AG04449 (cell line): ENCODE measurements at regions of chr9 and their contacts with region 1.

Region 1: GRCh38 chr9:3467593-3468219 is 58.1 kb downstream of the RFX3 start:
- DNase-seq: peak; percentile 17
- H3K4me3 ChIP-seq: no peak overlapping the region
- CTCF ChIP-seq: peak; percentile 96

Region 2: DNA sequence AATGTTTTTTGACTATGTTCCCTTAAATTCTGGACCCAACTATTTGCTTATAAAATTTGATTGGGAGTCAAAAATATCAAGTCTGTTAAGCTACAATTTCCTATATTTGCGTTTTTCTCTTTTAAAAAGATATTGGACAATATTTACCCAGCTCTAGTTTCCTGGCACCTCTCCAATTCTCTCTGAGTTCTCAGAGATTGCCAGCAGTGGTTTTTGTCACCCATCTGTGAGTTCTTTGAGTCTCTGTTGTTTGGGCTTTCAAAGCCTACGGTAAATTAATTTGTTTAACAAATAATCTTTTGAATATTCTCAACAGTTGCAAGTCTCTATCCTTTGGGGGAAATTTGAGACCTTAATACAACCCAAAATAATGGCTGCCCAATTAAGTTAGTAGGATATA is 449.6 kb before region 1 on chr9:
- CTCF ChIA-PET with region 1: no interaction called
- POLR2A ChIA-PET with region 1: no interaction called
- DNase-seq: no peak
- H3K4me3 ChIP-seq: no peak overlapping the region
- CTCF ChIP-seq: no peak

Region 3: DNA sequence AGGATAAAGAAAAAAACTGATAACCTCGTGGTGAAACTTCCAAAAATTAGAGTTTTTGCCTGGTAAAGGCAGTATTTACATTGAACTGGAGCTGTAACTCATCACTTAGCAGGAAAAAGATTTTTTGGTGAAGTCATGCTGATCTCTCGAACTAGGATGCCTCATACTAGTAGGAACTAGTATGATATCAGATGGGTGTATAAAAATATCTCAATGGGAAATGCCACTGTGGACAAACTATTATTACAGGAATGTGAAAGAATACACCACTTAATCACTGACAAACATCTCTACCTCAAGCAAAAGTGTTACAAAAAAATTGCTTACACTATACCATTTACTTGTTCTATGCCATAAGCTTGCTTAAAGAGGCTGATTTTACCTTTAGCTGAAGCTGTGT is 29.7 kb after region 1 on chr9:
- CTCF ChIA-PET with region 1: interaction called, 12 read pairs
- POLR2A ChIA-PET with region 1: no interaction called
- DNase-seq: peak; percentile 33
- H3K4me3 ChIP-seq: no peak overlapping the region
- CTCF ChIP-seq: no peak